Activated CD4-positive, alpha-beta T cell treated with anti-CD3 and anti-CD28 coated beads, Interleukin-2, amount 10 ng/mL, durations not matched to agents 24 days and 14 days (primary cell): ENCODE measurements at regions of chr5 and their contacts with region 1.

Region 1: DNA sequence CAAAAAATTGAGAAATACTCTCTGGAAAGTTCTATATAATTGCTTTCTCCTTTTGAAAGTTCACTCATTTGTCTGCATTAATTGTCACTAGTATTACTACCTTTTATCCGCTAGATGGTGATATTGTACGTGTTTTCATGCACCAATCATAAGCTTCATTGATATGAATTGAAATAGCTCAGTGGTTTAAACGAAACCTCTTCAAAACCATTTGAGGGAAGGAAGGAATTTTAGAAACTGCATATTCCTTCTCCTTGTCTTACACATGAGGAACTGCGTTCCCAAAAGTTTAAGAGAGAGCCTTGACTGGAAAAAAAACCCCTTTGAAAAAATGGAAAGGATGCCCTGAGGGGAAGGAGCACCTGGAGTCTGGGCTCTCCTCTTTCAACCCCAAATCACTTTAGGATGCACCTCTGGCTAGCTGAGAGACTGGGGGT is 98.6 kb downstream of the YTHDC2 start:
- DNase-seq: no peak
- H3K4me3 Mint-ChIP-seq: no peak overlapping the region
- H3K27ac Mint-ChIP-seq: no peak overlapping the region
- H3K4me1 Mint-ChIP-seq: peaks cover 5% of the 10 kb centered on the region
- H3K27me3 Mint-ChIP-seq: peaks cover 18% of the 10 kb centered on the region

Region 2: GRCh38 chr5:113663880-113664541 is 51.9 kb after region 1 on chr5:
- intact Hi-C with region 1: loop called (anchors 1 kb)
- DNase-seq: peak; percentile 78
- H3K4me3 Mint-ChIP-seq: no peak overlapping the region
- H3K27ac Mint-ChIP-seq: no peak overlapping the region
- H3K4me1 Mint-ChIP-seq: no peaks in the 10 kb centered on the region
- H3K27me3 Mint-ChIP-seq: peaks cover 13% of the 10 kb centered on the region

Region 3: GRCh38 chr5:114449860-114450421 is 837.9 kb after region 1 on chr5:
- intact Hi-C with region 1: loop called (anchors 2 kb)
- DNase-seq: peak; percentile 78
- H3K4me3 Mint-ChIP-seq: no peak overlapping the region
- H3K27ac Mint-ChIP-seq: no peak overlapping the region
- H3K4me1 Mint-ChIP-seq: no peaks in the 10 kb centered on the region
- H3K27me3 Mint-ChIP-seq: peaks cover 2% of the 10 kb centered on the region

Region 4: GRCh38 chr5:115246361-115246991 is 1634.4 kb after region 1 on chr5:
- intact Hi-C with region 1: loop called (anchors 5 kb)
- DNase-seq: no peak
- H3K4me3 Mint-ChIP-seq: no peak overlapping the region
- H3K27ac Mint-ChIP-seq: no peak overlapping the region
- H3K4me1 Mint-ChIP-seq: peaks cover 12% of the 10 kb centered on the region
- H3K27me3 Mint-ChIP-seq: no peaks in the 10 kb centered on the region

Region 5: GRCh38 chr5:115571441-115571878 is 1959.4 kb after region 1 on chr5:
- intact Hi-C with region 1: loop called (anchors 5 kb)
- DNase-seq: no peak
- H3K4me3 Mint-ChIP-seq: no peak overlapping the region
- H3K27ac Mint-ChIP-seq: no peak overlapping the region
- H3K4me1 Mint-ChIP-seq: no peaks in the 10 kb centered on the region
- H3K27me3 Mint-ChIP-seq: peaks cover 26% of the 10 kb centered on the region